ENCODE measurements at regions of chr13 and their contacts with region 1.

Region 1: DNA sequence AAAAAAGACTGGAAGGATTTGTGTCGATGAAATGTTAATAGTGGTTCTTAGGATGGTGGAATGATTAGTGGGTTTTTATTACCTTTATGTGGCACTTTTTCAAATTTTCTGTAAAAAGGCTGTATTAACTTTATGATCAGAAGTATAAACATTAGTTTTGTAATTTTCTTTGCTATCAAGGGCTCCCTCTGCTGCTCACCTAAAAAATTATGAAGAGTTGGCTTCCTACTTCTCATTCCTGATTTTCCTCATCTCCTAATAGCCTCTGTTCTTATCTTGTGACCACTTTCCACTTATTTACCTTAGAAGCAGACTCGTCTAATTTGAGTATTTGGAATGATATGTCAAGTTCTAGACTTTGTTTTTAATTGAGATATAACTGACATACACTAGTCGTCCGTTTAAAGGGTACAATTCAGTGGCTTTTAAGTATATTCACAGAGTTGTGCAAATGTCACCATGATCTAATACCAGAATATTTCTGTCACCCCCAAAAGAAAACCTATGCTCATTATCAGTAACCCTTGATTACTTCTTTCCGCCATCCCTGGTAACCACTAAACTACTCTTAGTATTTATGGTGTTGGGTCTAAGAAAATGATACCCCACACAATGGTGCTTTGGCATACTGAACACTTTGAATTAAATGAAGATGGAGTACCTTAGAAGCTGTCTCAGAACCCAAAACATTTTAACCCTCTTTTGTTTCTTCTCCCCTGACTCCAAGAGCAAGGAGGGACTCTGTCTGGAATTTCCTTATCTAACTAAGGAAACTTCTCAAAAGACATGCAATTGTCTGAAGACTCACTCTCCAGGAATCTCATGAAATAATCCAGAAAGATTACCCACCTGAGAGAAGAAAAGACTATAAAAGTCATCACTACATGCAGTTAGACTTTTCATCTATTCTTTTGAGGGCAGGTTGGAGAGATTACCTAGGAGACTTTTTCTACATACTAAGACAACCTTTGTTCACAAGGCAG is 311.3 kb downstream of the DLEU7 start:
- DNase-seq: no peak
- H3K4me3 ChIP-seq: no peak overlapping the region
- H3K27ac ChIP-seq: no peak overlapping the region
- H3K4me1 ChIP-seq: peaks cover 41% of the 10 kb centered on the region
- H3K27me3 ChIP-seq: no peaks in the 10 kb centered on the region
- CTCF ChIP-seq: peak; percentile 73

Region 2: GRCh38 chr13:49976314-49977258 is 555.6 kb before region 1 on chr13:
- intact Hi-C with region 1: loop called (anchors 10 kb)
- DNase-seq: peak; percentile 56
- H3K4me3 ChIP-seq: no peak overlapping the region
- H3K27ac ChIP-seq: no peak overlapping the region
- H3K4me1 ChIP-seq: peaks cover 17% of the 10 kb centered on the region
- H3K27me3 ChIP-seq: no peaks in the 10 kb centered on the region
- CTCF ChIP-seq: peak; percentile 90

Region 3: DNA sequence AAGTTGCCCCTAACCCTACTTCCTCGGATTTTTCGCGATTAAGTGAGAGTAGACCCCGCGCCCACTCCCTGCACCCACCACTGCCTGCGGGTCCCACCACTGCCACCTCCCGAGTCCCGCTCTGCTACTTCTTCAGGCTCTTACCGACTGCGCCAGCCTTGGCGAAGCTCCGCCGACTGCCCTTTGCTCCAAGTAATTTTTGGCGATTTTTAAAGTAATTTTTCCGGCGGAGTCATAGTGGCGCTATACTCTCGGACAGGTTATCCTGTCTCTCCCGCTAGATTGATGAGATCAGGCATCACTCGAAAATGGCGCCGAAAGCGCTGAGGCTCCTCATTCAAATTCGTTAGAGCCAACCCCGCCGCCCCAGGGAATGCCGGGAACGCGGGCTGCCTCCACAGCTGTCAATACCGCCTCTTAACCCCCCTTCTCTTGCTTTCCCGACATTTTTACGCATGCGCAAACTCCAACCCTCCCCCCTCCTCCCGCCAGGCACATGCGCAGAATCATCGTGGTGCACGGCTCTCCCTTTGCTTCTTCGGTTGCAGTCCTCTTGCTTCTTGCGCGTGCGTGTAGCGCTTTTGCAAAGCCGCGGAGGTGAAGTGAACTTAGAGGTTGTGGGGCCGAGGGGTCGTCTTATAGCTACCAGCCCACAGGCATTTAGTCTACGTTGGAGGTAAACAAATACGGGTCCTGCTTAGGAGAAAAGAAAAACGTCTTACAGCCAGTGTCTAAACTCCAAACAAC is 450.4 kb before region 1 on chr13:
- intact Hi-C with region 1: loop called (anchors 5 kb)
- DNase-seq: peak; percentile 97
- H3K4me3 ChIP-seq: peak overlapping the region; percentile 84
- H3K27ac ChIP-seq: peak overlapping the region; percentile 80
- H3K4me1 ChIP-seq: peaks cover 72% of the 10 kb centered on the region
- H3K27me3 ChIP-seq: peaks cover 5% of the 10 kb centered on the region
- CTCF ChIP-seq: no peak

Region 4: GRCh38 chr13:50801087-50801931 is 269.1 kb after region 1 on chr13:
- intact Hi-C with region 1: loop called (anchors 5 kb)
- DNase-seq: no peak
- H3K4me3 ChIP-seq: peak overlapping the region; percentile 35
- H3K27ac ChIP-seq: peak overlapping the region; percentile 37
- H3K4me1 ChIP-seq: peaks cover 27% of the 10 kb centered on the region
- H3K27me3 ChIP-seq: no peaks in the 10 kb centered on the region
- CTCF ChIP-seq: peak; percentile 84